Naive thymus-derived CD8-positive, alpha-beta T cell (primary cell): ENCODE measurements at regions of chr6 and their contacts with region 1.

Region 1: DNA sequence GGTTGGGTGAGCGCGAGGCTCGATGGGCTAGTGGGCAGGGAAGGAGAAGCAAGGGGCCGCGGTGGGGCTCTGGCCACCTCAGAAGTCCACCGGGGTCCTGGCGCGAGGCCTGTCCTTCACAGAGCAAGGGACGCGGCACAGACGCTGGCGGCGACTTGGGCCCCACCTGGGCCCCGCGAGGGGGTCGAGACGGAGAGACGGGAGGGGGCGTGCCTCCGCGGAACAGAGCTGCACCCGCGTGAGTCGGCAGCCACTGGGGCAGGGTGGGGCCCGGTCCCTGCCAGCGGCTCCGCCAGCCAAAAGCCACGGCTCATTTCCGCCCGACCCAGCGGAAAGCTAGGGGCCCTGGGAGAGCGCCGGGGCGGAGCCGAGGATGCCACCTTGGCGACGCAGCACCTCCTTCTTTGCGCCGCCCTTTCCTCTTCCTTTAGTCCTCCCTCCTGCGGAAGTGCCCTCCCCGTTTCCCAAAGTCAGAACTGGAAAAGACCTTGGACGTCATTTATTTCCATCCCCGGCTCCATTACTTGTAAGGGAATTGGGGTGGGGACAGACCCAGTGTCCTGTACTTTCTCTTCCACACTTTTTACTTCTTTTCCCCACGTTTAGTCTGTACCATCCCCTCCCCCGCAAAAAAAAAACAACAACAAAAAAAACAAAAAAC is at the start of gene CUL7:
- DNase-seq: peak; percentile 81 to 94 (median 86)
- ATAC-seq: peak; percentile 99
- H3K4me3 Mint-ChIP-seq: peak within 1 kb of the TSS; percentile 88 to 97 (median 94)
- H3K27ac Mint-ChIP-seq: peak within 1 kb of the TSS; percentile 80 to 98 (median 96)
- H3K4me1 Mint-ChIP-seq: peaks cover 34 to 54% (median 53%) of the 10 kb centered on the region in 4 donors
- H3K27me3 Mint-ChIP-seq: no peaks in the 10 kb centered on the region
- polyA plus RNA-seq, gene CUL7: 1.6 to 3.5 (median 1.6) TPM

Region 2: GRCh38 chr6:43013843-43014433 is 39.7 kb before region 1 on chr6 and contains the starts of genes KLHDC3 and MEA1:
- POLR2A ChIA-PET with region 1: interaction called, 41 read pairs
- DNase-seq: peak; percentile 93 to 100 (median 99)
- ATAC-seq: peak; percentile 92
- H3K4me3 Mint-ChIP-seq: peak within 1 kb of the TSS; percentile 89 to 97 (median 94)
- H3K27ac Mint-ChIP-seq: peak within 1 kb of the TSS; percentile 82 to 98 (median 95)
- H3K4me1 Mint-ChIP-seq: peaks cover 52 to 82% (median 68%) of the 10 kb centered on the region in 4 donors
- H3K27me3 Mint-ChIP-seq: no peaks in the 10 kb centered on the region
- polyA plus RNA-seq, gene KLHDC3: 107 to 136 (median 117) TPM
- polyA plus RNA-seq, gene MEA1: 73.4 to 90.9 (median 77.5) TPM

Region 3: GRCh38 chr6:43021270-43022047 is 32.2 kb before region 1 on chr6 and contains the start of gene RRP36:
- POLR2A ChIA-PET with region 1: interaction called, 41 read pairs
- DNase-seq: peak; percentile 39 to 76 (median 58)
- ATAC-seq: peak; percentile 83 to 88
- H3K4me3 Mint-ChIP-seq: peak within 1 kb of the TSS; percentile 95 to 99 (median 98)
- H3K27ac Mint-ChIP-seq: peak within 1 kb of the TSS; percentile 68 to 97 (median 93)
- H3K4me1 Mint-ChIP-seq: peaks cover 34 to 50% (median 48%) of the 10 kb centered on the region in 4 donors
- H3K27me3 Mint-ChIP-seq: no peaks in the 10 kb centered on the region
- polyA plus RNA-seq, gene RRP36: 52.7 to 74.5 (median 57.8) TPM